Activated CD4-positive, alpha-beta T cell treated with anti-CD3 and anti-CD28 coated beads for 36 hours (primary cell): ENCODE measurements at regions of chr10 and their contacts with region 1.

Region 1: GRCh38 chr10:73625884-73626752 is 15.2 kb downstream of the MYOZ1 start:
- DNase-seq: peak; percentile 97
- ATAC-seq: peak; percentile 99
- H3K4me3 Mint-ChIP-seq: peak overlapping the region; percentile 96
- H3K27ac Mint-ChIP-seq: peak overlapping the region; percentile 98
- H3K4me1 Mint-ChIP-seq: peaks cover 19% of the 10 kb centered on the region
- H3K27me3 Mint-ChIP-seq: no peaks in the 10 kb centered on the region

Region 2: GRCh38 chr10:73358331-73359279 is 267.5 kb before region 1 on chr10 and contains the start of gene CFAP70:
- CTCF ChIA-PET with region 1: no interaction called
- POLR2A ChIA-PET with region 1: no interaction called
- intact Hi-C with region 1: loop called in 1 of 2 experiments (anchors 1 kb)
- DNase-seq: peak; percentile 96
- ATAC-seq: peak; percentile 100
- H3K4me3 Mint-ChIP-seq: peak within 1 kb of the TSS; percentile 97
- H3K27ac Mint-ChIP-seq: peak within 1 kb of the TSS; percentile 84
- H3K4me1 Mint-ChIP-seq: peaks cover 14% of the 10 kb centered on the region
- H3K27me3 Mint-ChIP-seq: no peaks in the 10 kb centered on the region
- total RNA-seq, gene CFAP70: 0.58 to 0.71 TPM

Region 3: GRCh38 chr10:73495884-73496674 is 130.0 kb before region 1 on chr10 and contains the start of gene PPP3CB:
- CTCF ChIA-PET with region 1: no interaction called
- POLR2A ChIA-PET with region 1: interaction called, 6 read pairs
- intact Hi-C with region 1: loop called (anchors 1 kb)
- DNase-seq: peak; percentile 96
- ATAC-seq: peak; percentile 81
- H3K4me3 Mint-ChIP-seq: peak within 1 kb of the TSS; percentile 91
- H3K27ac Mint-ChIP-seq: peak within 1 kb of the TSS; percentile 99
- H3K4me1 Mint-ChIP-seq: peaks cover 45% of the 10 kb centered on the region
- H3K27me3 Mint-ChIP-seq: no peaks in the 10 kb centered on the region
- total RNA-seq, gene PPP3CB: 42.3 to 45.3 TPM

Region 4: DNA sequence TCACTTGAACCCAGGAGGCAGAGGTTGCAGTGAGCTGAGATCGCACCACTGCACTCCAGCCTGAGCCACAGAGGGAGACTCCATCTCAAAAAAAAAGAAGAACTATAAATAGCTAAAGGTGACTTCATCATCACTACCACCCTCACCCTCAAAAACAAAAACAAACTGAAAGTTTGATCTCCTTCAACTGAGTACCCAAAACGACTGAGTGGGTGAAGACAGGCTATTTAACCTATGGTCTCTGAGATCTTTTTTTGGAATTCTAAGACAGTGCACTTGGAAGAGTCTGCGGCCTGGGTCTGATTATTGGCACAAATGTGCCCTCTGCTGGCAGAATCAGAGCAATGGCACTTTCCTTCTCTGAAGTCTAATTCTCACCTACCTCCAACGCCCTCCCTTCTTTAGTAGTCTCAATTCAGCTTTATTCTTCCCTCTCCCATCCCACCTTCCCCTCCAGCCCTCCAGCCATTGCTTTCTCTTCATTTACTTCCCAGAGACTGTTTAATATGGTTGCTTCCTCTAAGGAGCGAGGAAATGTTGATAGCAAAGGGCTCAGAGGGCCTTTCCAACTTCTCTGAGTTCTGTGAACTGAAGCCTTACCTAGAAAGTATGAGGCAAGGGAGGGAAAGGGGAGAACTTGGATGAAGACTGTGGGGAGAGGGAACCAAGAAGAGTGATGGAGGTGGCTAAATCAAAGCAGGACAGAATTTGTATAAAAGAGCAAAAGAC is 18.1 kb after region 1 on chr10:
- CTCF ChIA-PET with region 1: interaction called, 22 read pairs
- POLR2A ChIA-PET with region 1: interaction called, 3 read pairs
- intact Hi-C with region 1: no loop called
- DNase-seq: peak; percentile 64
- ATAC-seq: peak; percentile 78
- H3K4me3 Mint-ChIP-seq: no peak overlapping the region
- H3K27ac Mint-ChIP-seq: no peak overlapping the region
- H3K4me1 Mint-ChIP-seq: peaks cover 19% of the 10 kb centered on the region
- H3K27me3 Mint-ChIP-seq: no peaks in the 10 kb centered on the region

Region 5: GRCh38 chr10:73772280-73773151 is 146.4 kb after region 1 on chr10:
- CTCF ChIA-PET with region 1: interaction called, 3 read pairs
- POLR2A ChIA-PET with region 1: no interaction called
- intact Hi-C with region 1: loop called in 1 of 2 experiments (anchors 5 kb)
- DNase-seq: peak; percentile 89
- ATAC-seq: peak; percentile 75
- H3K4me3 Mint-ChIP-seq: peak overlapping the region; percentile 86
- H3K27ac Mint-ChIP-seq: peak overlapping the region; percentile 91
- H3K4me1 Mint-ChIP-seq: peaks cover 53% of the 10 kb centered on the region
- H3K27me3 Mint-ChIP-seq: no peaks in the 10 kb centered on the region

Region 6: DNA sequence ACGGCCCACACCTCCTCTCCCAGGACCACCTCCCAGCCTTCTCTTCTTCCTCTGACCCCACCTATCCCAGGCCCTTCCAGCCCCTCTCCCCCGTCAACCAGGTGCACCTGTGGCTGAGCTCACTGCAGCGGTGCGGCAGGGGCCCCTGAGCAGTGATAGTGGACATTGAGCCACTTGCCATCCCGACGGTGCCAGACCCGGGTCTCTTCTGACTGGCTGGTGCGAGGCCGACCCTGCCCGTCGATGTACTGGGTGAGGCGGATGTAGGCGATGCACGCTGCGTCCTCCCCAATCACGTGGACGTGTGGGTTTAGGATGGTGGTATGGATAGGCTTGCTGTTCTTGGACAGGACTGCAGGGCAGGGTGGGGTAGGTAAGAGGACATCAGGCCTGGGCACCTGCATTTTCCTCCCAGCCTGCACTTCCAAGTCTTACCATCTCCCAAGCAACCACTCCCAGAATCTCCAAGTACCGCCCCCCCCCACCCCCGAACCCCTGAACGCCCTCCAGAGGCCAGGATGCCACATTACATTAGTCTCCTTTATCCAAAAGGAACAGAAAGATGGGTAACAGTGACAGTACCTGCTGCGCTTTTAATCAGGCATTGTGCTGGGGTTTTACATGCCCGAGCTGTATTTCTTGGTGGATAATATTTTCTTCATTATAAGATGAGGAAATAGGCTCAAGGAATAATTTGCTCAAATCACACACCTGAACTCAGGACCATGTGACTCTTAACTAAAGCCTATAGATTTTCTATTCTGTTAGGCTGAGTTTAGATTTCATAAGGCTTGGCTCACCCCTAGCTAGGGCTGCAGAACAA is 189.0 kb after region 1 on chr10:
- CTCF ChIA-PET with region 1: no interaction called
- POLR2A ChIA-PET with region 1: no interaction called
- intact Hi-C with region 1: no loop called
- DNase-seq: peak; percentile 40
- ATAC-seq: no peak
- H3K4me3 Mint-ChIP-seq: no peak overlapping the region
- H3K27ac Mint-ChIP-seq: no peak overlapping the region
- H3K4me1 Mint-ChIP-seq: peaks cover 4% of the 10 kb centered on the region
- H3K27me3 Mint-ChIP-seq: no peaks in the 10 kb centered on the region